KBM-7 (cell line): ENCODE measurements at regions of chr19 and their contacts with region 1.

Region 1: DNA sequence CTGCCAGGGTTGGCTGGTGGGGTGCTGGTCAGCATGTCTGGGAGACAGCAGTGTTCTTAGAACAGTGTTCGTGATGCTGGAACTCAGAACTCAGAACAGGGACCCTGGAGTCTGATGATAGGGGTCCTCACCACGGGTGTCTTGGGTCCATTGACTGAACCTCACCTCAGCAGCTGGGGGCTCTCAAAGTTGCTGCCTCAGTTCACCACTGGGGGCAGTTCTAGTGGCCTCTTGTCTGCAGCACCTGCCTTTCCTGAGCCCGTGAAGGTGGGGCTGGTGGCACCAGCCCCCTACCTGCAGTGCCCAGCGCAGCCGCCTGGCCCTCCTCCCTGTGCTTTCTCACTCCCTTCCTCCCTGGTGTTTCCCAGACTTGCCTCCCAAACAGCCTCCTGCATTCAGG is 28.5 kb downstream of the SAFB start:
- DNase-seq: no peak

Region 2: GRCh38 chr19:5542665-5543064 is 108.7 kb before region 1 on chr19:
- in situ Hi-C with region 1: no loop called
- DNase-seq: no peak

Region 3: DNA sequence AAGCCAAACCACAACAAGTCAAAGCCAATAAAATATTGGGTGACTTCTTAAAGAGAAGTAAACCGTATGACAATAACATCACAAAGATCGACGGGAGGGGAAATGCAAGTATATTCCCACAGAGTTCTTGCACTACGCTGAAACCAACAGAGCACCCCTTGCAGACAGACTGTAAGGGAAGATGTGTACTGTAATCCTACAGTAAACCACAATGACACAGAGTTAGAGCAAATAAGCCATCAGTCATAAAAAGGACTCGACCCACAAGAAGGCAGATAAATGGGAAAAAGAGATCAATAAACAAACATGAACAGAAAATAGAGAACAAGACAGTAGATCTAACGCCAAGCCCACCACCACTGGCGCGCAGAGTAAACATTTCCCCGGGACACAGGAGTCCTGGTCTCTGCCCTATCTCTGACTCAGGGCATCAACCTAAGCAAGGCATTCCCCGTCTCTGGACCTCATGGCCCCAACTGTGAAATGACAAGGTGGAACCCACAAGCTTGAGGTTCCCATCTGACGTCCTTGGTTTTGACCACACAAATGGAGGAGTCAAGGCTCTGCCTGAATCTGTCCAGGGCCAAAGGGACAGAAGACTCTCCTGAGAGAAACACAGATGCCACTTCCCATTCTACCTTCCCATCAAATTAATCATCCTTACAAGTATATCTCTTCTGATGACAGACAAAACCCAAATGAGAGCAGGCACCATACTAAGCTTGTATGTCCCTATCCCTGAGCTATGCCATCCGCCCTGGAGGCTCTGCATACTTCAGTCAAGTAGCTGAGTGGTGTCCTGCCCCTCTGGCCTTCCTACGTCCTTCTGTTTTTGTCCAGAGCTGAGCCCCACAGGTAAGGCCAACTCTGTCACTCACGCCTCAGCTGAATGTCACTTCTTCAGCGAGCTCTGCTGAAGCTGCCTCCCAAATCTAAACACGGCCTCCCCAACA is 43.8 kb before region 1 on chr19:
- in situ Hi-C with region 1: loop called (anchors 10 kb)
- DNase-seq: no peak

Region 4: GRCh38 chr19:5719961-5720790 is 68.8 kb after region 1 on chr19 and contains the starts of genes CATSPERD and LONP1:
- in situ Hi-C with region 1: no loop called
- DNase-seq: peak; percentile 100